Activated T-helper 2 cell treated with anti-CD3 and anti-CD28 coated beads, Interferon-gamma antibody, Interleukin-2, Interleukin-4, amounts not matched to agents 10 μg/mL and 5 μg/mL and 100 μg/mL, durations not matched to agents 14 hours and 24 hours and 36 hours (primary cell): ENCODE measurements at regions of chr13 and their contacts with region 1.

Region 1: GRCh38 chr13:39196958-39197646 is 158.8 kb downstream of the NHLRC3 start:
- DNase-seq: no peak
- H3K4me3 Mint-ChIP-seq: no peak overlapping the region
- H3K27ac Mint-ChIP-seq: peak overlapping the region; percentile 72
- H3K4me1 Mint-ChIP-seq: peaks cover 9% of the 10 kb centered on the region
- H3K27me3 Mint-ChIP-seq: peaks cover 11% of the 10 kb centered on the region

Region 2: GRCh38 chr13:39144941-39145533 is 52.1 kb before region 1 on chr13:
- intact Hi-C with region 1: loop called (anchors 1 kb)
- DNase-seq: no peak
- H3K4me3 Mint-ChIP-seq: no peak overlapping the region
- H3K27ac Mint-ChIP-seq: no peak overlapping the region
- H3K4me1 Mint-ChIP-seq: peaks cover 12% of the 10 kb centered on the region
- H3K27me3 Mint-ChIP-seq: peaks cover 31% of the 10 kb centered on the region